PC-9 (cell line): ENCODE measurements at regions of chr1 and their contacts with region 1.

Region 1: DNA sequence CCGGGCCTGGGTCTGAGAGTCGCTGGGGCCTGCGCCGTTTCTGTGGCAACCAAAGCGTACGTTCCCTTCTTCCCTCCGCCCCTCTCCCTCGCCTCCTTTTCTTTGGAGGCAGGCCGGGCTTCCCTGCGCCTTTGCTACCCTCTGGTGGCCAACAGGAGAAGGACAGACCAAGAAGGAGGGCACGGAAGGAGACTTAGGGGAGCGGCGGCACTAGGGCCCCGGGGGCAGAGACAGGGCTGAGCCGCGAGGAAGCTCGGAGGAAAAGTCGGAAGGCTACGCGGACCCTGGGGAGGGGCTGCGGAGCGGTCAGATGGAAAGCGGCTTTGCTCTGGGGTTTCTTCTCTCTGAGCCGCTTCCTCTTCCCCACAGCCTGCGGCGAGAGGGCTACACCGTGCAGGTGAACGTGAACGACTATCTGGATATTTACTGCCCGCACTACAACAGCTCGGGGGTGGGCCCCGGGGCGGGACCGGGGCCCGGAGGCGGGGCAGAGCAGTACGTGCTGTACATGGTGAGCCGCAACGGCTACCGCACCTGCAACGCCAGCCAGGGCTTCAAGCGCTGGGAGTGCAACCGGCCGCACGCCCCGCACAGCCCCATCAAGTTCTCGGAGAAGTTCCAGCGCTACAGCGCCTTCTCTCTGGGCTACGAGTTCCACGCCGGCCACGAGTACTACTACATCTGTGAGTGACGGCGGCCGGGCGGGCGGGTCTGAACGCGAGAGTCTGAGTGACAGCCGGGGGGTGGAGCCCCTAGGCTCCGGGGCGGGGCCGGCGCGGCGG is 6.3 kb downstream of the EFNA3 start:
- DNase-seq: peak; percentile 81 to 92
- H3K4me3 ChIP-seq: peak overlapping the region; percentile 70
- H3K27ac ChIP-seq: peak overlapping the region; percentile 72
- H3K4me1 ChIP-seq: peaks cover 50% of the 10 kb centered on the region
- H3K27me3 ChIP-seq: peaks cover 23% of the 10 kb centered on the region
- CTCF ChIP-seq: peak; percentile 94

Region 2: DNA sequence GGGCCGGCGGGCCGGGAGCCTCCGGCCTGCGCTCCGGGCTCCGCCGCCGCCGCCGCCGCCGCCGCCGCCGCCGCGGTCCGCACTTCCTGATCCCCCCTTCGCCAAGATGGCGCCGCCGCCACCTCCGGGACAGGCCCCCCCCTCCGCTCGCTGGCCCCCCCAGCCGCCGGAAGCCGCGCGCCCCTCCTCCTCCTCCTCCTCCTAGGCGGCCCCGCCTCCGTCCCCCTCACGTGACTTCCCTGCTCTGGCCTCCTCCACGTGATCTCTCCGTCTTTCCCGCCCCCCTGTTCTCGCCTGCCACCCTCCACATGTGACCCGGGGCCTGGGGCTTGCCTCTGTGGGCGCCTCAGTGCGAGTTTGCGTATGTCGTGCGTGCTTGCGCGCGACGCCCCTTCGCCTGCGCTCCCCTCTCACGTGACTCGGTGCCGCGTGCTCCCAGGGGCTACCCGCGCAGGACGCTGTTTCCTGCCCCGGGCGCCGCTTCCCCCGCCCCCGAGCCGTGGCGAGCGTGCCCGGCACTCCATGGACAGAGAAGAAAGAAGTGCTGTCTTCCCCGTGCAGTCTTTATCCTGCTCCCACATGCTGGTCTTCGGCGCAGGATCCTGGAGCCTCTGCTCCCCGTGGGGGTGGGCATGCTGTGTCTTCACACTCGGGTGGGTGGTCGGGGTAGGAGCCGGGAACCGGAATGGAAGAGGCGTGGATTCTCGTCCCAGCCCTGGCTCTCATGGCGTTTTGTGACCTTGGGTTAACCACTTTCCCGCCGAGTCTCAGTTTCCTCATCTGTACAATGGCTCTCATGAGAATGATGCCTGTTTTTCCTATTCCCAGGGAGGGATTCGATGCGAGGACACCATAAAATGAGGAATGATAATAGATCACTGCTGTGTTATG is 526.1 kb before region 1 on chr1 and contains the start of gene UBE2Q1:
- CTCF ChIA-PET with region 1: interaction called, 3 read pairs
- POLR2A ChIA-PET with region 1: no interaction called
- intact Hi-C with region 1: loop called (anchors 1 kb)
- DNase-seq: peak; percentile 87 to 98
- H3K4me3 ChIP-seq: peak within 1 kb of the TSS; percentile 98
- H3K27ac ChIP-seq: peak within 1 kb of the TSS; percentile 61
- H3K4me1 ChIP-seq: peaks cover 16% of the 10 kb centered on the region; the same call in 1 of the 2 replicates
- H3K27me3 ChIP-seq: no peaks in the 10 kb centered on the region; the same call in 1 of the 2 replicates
- CTCF ChIP-seq: no peak
- total RNA-seq, gene UBE2Q1: 52.8 and 63.3 TPM in 2 replicates

Region 3: GRCh38 chr1:154936555-154937084 is 148.3 kb before region 1 on chr1 and contains the start of gene PMVK:
- CTCF ChIA-PET with region 1: no interaction called
- POLR2A ChIA-PET with region 1: interaction called, 7 read pairs
- intact Hi-C with region 1: loop called (anchors 2 kb)
- DNase-seq: peak; percentile 87 to 95
- H3K4me3 ChIP-seq: peak within 1 kb of the TSS; percentile 62
- H3K27ac ChIP-seq: peak within 1 kb of the TSS; percentile 93
- H3K4me1 ChIP-seq: peaks cover 50% of the 10 kb centered on the region
- H3K27me3 ChIP-seq: no peaks in the 10 kb centered on the region
- CTCF ChIP-seq: peak; percentile 42; the same call in 1 of the 2 replicates
- total RNA-seq, gene PMVK: 27.1 and 38.2 TPM in 2 replicates

Region 4: GRCh38 chr1:155001675-155002463 is 83.0 kb before region 1 on chr1:
- CTCF ChIA-PET with region 1: no interaction called
- POLR2A ChIA-PET with region 1: interaction called, 4 read pairs
- intact Hi-C with region 1: loop called (anchors 1 kb)
- DNase-seq: peak; percentile 96 to 99
- H3K4me3 ChIP-seq: peak overlapping the region; percentile 80
- H3K27ac ChIP-seq: peak overlapping the region; percentile 72
- H3K4me1 ChIP-seq: peaks cover 20% of the 10 kb centered on the region
- H3K27me3 ChIP-seq: no peaks in the 10 kb centered on the region
- CTCF ChIP-seq: peak; percentile 68; the same call in 1 of the 2 replicates

Region 5: DNA sequence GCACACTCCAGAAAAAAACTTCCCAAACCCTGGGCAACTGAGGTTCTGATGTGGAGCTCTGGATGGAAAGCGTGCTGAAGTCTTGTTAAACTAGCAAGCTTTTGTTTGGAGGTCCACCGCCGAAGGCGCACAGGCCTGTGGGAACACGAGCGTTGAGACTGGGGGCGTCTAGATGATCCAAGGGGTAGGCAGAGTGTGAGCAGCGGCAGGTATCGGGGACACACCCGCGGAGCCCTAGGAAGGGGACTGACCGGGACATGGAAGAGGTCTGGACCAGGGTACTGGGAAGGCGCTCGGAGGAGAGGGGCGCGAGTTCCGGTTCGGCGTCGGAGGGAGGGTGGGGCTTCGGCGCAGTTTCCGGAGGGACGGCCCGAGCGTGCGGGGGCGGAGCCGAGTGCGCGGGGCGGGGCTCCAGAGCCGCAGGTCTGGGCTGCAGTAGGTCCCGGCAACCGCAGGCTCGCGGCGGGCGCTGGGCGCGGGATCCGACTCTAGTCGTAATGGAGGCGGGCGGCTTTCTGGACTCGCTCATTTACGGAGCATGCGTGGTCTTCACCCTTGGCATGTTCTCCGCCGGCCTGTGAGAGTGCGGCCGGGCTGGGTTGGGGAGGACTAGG is 50.6 kb after region 1 on chr1 and contains the start of gene SLC50A1:
- CTCF ChIA-PET with region 1: no interaction called
- POLR2A ChIA-PET with region 1: no interaction called
- intact Hi-C with region 1: loop called (anchors 2 kb)
- DNase-seq: peak; percentile 80 to 94
- H3K4me3 ChIP-seq: peak within 1 kb of the TSS; percentile 78
- H3K27ac ChIP-seq: peak within 1 kb of the TSS; percentile 99
- H3K4me1 ChIP-seq: peaks cover 54% of the 10 kb centered on the region
- H3K27me3 ChIP-seq: no peaks in the 10 kb centered on the region
- CTCF ChIP-seq: 0 out of 2 replicates have a peak, but pooled peaks have one; percentile 15
- total RNA-seq, gene SLC50A1: 54.9 and 67.6 TPM in 2 replicates

Region 6: DNA sequence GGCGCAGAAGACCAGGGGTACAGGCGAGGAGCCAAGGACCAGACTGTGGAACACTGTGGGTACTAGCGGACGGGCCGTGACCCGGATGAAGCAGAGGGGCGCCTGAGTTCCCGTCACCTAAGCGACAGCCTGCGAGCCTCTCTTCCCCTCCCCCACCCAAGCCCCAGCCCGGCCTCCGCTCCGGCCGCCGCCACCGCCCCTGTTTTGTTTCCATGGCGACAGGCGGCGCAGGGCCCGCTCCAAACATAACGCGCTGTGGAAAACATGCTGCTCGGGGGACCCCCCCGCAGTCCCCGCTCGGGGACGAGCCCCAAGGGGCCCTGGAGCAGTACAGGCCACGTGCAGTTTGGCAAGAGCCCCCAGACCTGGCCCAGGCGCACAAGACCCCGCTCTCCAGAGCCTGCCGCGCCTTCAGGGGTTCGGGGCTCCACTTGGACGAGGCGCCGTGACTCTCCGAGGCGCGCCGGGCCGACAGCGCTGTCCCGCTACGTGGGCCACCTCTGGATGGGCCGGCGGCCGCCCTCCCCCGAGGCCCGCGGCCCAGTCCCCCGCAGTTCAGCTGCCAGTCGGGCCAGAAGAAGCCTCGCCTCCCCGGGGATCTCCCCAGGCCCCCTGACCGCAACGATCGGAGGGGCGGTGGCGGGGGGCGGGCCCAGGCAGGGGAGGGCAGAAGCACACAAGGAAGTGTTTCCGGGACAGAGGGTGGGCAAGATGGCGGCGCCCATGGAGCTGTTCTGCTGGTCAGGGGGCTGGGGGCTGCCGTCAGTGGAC is 123.8 kb after region 1 on chr1 and contains the start of gene MTX1:
- CTCF ChIA-PET with region 1: no interaction called
- POLR2A ChIA-PET with region 1: no interaction called
- intact Hi-C with region 1: no loop called
- DNase-seq: peak; percentile 60 to 85
- H3K4me3 ChIP-seq: peak within 1 kb of the TSS; percentile 78
- H3K27ac ChIP-seq: peak within 1 kb of the TSS; percentile 74
- H3K4me1 ChIP-seq: peaks cover 26% of the 10 kb centered on the region
- H3K27me3 ChIP-seq: no peaks in the 10 kb centered on the region
- CTCF ChIP-seq: no peak
- total RNA-seq, gene MTX1: 56.1 and 68.9 TPM in 2 replicates